PC-3 (cell line): ENCODE measurements at regions of chr2 and their contacts with region 1.

Region 1: DNA sequence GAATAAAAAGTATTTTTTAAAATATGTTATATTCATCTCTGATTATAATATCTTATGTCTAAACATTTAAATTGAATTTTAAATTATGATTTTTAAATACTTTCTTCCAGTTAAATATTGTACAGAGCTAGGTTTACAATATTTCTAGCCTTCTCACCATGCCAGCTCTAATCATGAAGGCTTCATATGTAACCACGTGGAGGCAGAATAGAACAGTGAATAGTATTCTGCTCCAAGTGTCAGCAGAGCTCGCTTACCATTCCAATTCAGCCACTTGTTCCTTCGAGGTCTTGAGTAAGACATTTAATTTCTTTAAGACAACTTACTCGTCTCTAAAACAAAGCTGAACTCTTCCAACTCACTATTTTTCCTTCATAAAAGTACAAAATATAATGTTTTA is 871.8 kb downstream of the SUCLG1 start:
- DNase-seq: peak; percentile 37
- ATAC-seq: peak; percentile 43; the same call in 1 of the 2 replicates
- H3K4me3 ChIP-seq: no peak overlapping the region
- H3K27ac ChIP-seq: no peak overlapping the region
- H3K4me1 ChIP-seq: no peaks in the 10 kb centered on the region
- H3K27me3 ChIP-seq: no peaks in the 10 kb centered on the region
- CTCF ChIP-seq: peak; percentile 26

Region 2: DNA sequence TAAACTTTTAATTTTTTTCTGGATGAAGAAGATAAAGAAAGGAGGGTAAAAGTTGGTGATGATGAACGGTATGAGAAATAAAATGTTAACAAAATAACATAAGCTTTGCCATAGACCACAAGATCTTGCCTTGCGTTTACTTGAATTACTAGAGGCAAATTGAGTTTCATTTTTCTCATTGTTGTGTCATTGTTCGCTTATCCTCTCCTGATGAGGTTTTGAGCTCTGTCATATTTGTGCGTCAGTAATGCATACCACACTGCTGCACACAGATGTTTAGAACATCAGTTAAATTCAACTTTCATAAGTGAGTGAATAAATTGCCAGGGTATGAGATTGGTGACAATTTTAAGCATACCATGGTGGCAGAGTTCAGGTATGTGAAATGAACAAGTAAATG is 28.2 kb after region 1 on chr2:
- CTCF ChIA-PET with region 1: no interaction called
- POLR2A ChIA-PET with region 1: no interaction called
- intact Hi-C with region 1: no loop called
- DNase-seq: no peak
- ATAC-seq: no peak
- H3K4me3 ChIP-seq: no peak overlapping the region
- H3K27ac ChIP-seq: no peak overlapping the region
- H3K4me1 ChIP-seq: no peaks in the 10 kb centered on the region
- H3K27me3 ChIP-seq: no peaks in the 10 kb centered on the region
- CTCF ChIP-seq: no peak

Region 3: GRCh38 chr2:83817511-83817910 is 230.2 kb after region 1 on chr2:
- CTCF ChIA-PET with region 1: no interaction called
- POLR2A ChIA-PET with region 1: no interaction called
- intact Hi-C with region 1: loop called (anchors 1 kb)
- DNase-seq: peak; percentile 42
- ATAC-seq: peak; percentile 27; the same call in 1 of the 2 replicates
- H3K4me3 ChIP-seq: no peak overlapping the region
- H3K27ac ChIP-seq: no peak overlapping the region
- H3K4me1 ChIP-seq: no peaks in the 10 kb centered on the region
- H3K27me3 ChIP-seq: no peaks in the 10 kb centered on the region
- CTCF ChIP-seq: peak; percentile 57